ENCODE measurements at regions of chr3 and their contacts with region 1.

Region 1: GRCh38 chr3:187935623-187936156 is 190.4 kb upstream of the BCL6 start:
- DNase-seq: no peak
- H3K4me3 Mint-ChIP-seq: no peak overlapping the region
- H3K27ac Mint-ChIP-seq: no peak overlapping the region
- H3K4me1 Mint-ChIP-seq: no peaks in the 10 kb centered on the region
- H3K27me3 Mint-ChIP-seq: no peaks in the 10 kb centered on the region
- CTCF ChIP-seq: no peak

Region 2: GRCh38 chr3:187783098-187783497 is 152.6 kb before region 1 on chr3:
- CTCF ChIA-PET with region 1: no interaction called
- intact Hi-C with region 1: no loop called
- DNase-seq: peak; percentile 13
- H3K4me3 Mint-ChIP-seq: no peak overlapping the region
- H3K27ac Mint-ChIP-seq: no peak overlapping the region
- H3K4me1 Mint-ChIP-seq: no peaks in the 10 kb centered on the region
- H3K27me3 Mint-ChIP-seq: no peaks in the 10 kb centered on the region
- CTCF ChIP-seq: no peak

Region 3: DNA sequence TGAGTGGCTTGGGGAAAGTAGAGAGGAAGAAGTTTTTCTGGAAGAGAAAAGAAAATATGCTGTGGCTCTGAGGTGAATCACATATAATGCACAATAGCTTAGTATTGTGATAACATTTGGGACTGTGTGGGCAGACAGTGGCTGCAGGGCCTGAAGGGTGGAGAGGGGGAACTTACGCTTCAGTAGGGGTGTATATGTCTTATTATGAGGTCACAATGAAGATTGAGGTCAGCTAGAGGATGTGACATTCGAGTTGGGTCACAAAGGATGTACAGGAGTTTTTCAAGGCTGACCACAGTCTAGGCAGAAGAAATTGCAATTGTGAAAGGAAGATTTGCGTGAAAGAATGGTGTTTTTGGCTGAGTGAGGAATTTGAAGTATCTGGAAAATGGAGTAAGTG is 633.0 kb after region 1 on chr3:
- CTCF ChIA-PET with region 1: interaction called, 15 read pairs
- intact Hi-C with region 1: no loop called
- DNase-seq: no peak
- H3K4me3 Mint-ChIP-seq: no peak overlapping the region
- H3K27ac Mint-ChIP-seq: no peak overlapping the region
- H3K4me1 Mint-ChIP-seq: peaks cover 16% of the 10 kb centered on the region
- H3K27me3 Mint-ChIP-seq: no peaks in the 10 kb centered on the region
- CTCF ChIP-seq: no peak

Measured in Calu3 (cell line).